ENCODE measurements at regions of chr7 and their contacts with region 1.

Region 1: DNA sequence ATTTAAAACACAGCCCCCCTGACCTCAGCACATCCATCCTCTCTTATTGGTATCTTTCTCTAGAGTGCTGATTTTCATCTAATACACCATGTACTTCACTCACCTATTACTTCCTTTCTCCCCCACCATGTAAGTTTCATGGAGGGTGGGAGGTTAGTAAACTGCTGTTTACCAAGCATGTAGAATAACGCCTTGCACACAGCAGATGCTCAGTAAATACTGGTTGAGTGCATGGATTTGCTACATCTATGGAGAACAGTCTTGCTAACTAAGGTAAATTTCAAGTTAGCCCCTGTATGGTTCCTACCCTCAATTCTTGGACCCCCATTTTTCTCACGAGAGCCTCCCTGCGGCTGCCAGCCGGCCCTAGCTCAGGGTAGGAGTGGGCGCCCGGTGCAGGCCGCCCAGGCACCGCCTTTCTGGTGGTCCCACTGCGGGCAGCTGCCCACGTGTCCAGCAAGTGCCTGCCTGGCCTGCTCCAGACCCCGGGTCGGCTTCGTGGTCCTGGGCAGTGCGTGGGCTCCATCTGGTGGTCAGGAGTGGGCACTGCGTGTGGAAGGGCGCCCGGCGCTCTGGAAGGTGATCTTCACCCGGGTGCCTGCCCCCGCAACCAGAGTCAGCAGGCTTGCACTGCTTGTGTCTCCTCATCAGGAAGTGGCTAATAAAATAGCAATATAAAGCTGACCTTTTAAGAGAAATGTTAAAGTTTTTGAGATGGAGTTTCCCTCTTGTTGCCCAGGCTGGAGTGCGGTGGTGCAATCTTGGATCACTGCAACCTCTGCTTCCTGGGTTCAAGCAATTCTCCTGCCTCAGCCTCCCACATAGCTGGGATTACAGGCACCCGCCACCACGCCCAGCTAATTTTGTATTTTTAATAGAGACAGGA is 63.4 kb upstream of the DNAJB6 start:
- DNase-seq: peak; percentile 17 to 66 (median 50)
- ATAC-seq: peak; percentile 84
- H3K4me3 ChIP-seq: no peak overlapping the region
- H3K4me3 Mint-ChIP-seq: peak overlapping the region in 1 of 10 donors; percentile 25
- H3K27ac ChIP-seq: no peak overlapping the region
- H3K27ac Mint-ChIP-seq: peak overlapping the region in 5 of 9 donors; percentile 16 to 81 (median 69)
- H3K4me1 ChIP-seq: peaks cover 6 to 14% of the 10 kb centered on the region in 2 donors
- H3K4me1 Mint-ChIP-seq: peaks cover 0 to 25% (median 13%) of the 10 kb centered on the region in 7 donors
- H3K27me3 ChIP-seq: no peaks in the 10 kb centered on the region
- H3K27me3 Mint-ChIP-seq: peaks cover 0 to 4% (median 0%) of the 10 kb centered on the region in 5 donors

Region 2: DNA sequence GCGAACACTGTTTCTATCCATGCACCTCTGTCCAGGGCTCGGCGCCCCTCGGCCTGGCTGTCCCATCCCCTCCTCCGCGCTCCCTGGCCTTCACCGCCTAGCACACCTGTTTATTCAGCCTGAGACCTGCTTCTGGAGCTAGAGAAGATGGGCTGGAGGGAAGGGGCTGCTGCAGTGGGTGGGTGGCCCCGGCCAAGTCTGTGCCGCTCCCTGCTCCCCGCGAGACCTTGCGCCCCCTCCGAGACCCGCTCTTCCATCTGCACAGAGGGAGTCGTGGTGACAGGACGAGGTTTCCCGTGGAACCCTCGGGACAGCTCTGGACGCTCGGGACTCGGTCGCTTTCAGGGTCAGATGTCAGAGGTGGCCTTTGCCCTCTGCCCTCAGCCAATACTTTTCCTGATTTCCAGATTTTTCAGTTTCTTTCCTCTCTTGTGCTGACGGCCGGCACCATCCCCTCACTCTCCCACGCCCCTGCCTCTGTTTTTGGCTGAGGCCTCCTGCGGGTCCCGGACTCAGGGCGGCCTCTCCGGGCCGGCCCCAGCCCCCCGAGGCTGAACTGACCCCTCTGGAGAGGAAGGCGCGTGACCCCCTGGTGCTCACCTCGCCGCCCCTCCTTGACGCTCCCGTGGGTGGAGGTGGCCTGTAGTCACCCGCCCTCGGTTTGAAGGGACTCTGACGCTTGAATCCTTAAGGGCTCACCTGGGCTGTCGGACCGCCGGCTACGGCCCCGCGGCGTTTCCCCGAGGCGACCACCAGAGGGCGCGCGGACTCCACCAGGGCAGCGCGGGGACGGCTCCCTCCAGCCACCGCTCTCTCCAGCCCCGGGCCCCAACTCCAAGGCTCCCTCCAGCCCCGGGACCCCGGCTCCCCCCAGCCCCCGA is 1476.8 kb before region 1 on chr7:
- CTCF ChIA-PET with region 1: no interaction called
- POLR2A ChIA-PET with region 1: no interaction called
- intact Hi-C with region 1: loop called in 1 of 2 experiments (anchors 1 kb)
- DNase-seq: peak; percentile 23 to 80 (median 54)
- ATAC-seq: peak; percentile 79
- H3K4me3 ChIP-seq: no peak overlapping the region
- H3K4me3 Mint-ChIP-seq: no peak overlapping the region
- H3K27ac ChIP-seq: no peak overlapping the region
- H3K27ac Mint-ChIP-seq: no peak overlapping the region
- H3K4me1 ChIP-seq: no peaks in the 10 kb centered on the region
- H3K4me1 Mint-ChIP-seq: peaks cover 0 to 12% (median 8%) of the 10 kb centered on the region in 7 donors
- H3K27me3 ChIP-seq: peaks cover 0 to 3% of the 10 kb centered on the region in 2 donors
- H3K27me3 Mint-ChIP-seq: peaks cover 28 to 45% (median 33%) of the 10 kb centered on the region in 5 donors

Region 3: GRCh38 chr7:156969972-156970420 is 303.5 kb before region 1 on chr7:
- CTCF ChIA-PET with region 1: interaction called, 3 read pairs
- POLR2A ChIA-PET with region 1: no interaction called
- intact Hi-C with region 1: loop called in 1 of 2 experiments (anchors 1 kb)
- DNase-seq: peak in 4 of 9 donors; percentile 11 to 26 (median 16)
- ATAC-seq: peak; percentile 52
- H3K4me3 ChIP-seq: no peak overlapping the region
- H3K4me3 Mint-ChIP-seq: no peak overlapping the region
- H3K27ac ChIP-seq: no peak overlapping the region
- H3K27ac Mint-ChIP-seq: peak overlapping the region in 1 of 9 donors; percentile 59
- H3K4me1 ChIP-seq: no peaks in the 10 kb centered on the region
- H3K4me1 Mint-ChIP-seq: no peaks in the 10 kb centered on the region
- H3K27me3 ChIP-seq: no peaks in the 10 kb centered on the region
- H3K27me3 Mint-ChIP-seq: no peaks in the 10 kb centered on the region

Region 4: DNA sequence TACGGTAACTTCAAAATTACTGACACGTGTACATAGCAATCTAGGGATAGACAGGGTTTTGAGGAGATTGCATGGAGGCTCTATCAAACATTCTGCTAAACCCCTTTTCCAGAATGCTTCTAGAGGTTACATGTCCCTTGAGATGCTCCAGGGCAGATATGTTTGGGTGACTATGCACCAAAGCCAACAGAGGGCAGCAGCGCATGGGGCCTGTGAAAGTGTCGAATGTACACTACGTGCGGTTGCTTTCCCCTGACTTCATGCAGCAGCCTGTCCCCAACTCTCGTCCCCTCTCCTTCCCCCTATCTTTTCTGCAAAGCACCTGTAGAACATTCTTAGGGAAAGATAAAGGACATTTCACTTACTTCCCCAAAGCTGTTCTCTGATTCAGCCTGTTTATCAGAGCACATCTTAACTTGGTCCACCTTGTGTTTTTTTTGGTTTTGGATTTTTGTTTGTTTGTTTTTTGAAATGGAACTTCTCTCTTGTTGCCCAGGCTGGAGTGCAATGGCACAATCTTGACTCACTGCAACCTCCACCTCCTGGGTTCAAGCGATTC is 44.5 kb before region 1 on chr7:
- CTCF ChIA-PET with region 1: no interaction called
- POLR2A ChIA-PET with region 1: no interaction called
- intact Hi-C with region 1: no loop called
- DNase-seq: peak in 5 of 9 donors; percentile 9 to 28 (median 15)
- ATAC-seq: peak; percentile 53
- H3K4me3 ChIP-seq: no peak overlapping the region
- H3K4me3 Mint-ChIP-seq: no peak overlapping the region
- H3K27ac ChIP-seq: no peak overlapping the region
- H3K27ac Mint-ChIP-seq: no peak overlapping the region
- H3K4me1 ChIP-seq: no peaks in the 10 kb centered on the region
- H3K4me1 Mint-ChIP-seq: peaks cover 0 to 4% (median under 1%) of the 10 kb centered on the region in 7 donors
- H3K27me3 ChIP-seq: no peaks in the 10 kb centered on the region
- H3K27me3 Mint-ChIP-seq: no peaks in the 10 kb centered on the region

Region 5: DNA sequence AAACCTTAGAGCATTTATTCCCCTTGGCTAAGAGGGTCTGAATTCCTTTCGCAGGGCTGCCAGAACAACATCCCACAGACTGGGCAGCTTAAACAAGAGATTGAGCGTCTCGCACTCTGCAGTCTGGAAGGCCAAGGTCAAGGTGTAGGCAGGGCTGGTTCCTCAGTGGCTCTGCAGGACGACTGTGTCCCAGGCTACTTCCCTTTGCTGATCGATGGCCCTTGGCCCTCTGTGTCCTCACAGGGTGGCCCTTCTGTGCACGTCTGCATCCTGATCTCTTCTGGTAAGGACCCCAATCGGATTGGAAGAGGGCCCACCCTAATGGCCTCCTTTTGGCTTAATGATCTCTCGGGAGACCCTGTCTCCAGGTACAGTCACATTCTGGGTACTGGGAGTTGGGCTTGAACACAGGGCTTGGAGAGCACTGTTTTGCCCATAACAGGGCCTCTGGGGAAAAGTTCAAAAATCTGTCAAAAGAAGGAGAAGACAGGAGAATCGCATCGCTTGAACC is 28.2 kb after region 1 on chr7:
- CTCF ChIA-PET with region 1: interaction called, 3 read pairs
- POLR2A ChIA-PET with region 1: no interaction called
- intact Hi-C with region 1: loop called in 1 of 2 experiments (anchors 2 kb)
- DNase-seq: no peak
- ATAC-seq: no peak
- H3K4me3 ChIP-seq: no peak overlapping the region
- H3K4me3 Mint-ChIP-seq: peak overlapping the region; percentile 66 to 84 (median 72)
- H3K27ac ChIP-seq: no peak overlapping the region
- H3K27ac Mint-ChIP-seq: peak overlapping the region; percentile 3 to 88 (median 80)
- H3K4me1 ChIP-seq: peaks cover 10 to 23% of the 10 kb centered on the region in 2 donors
- H3K4me1 Mint-ChIP-seq: peaks cover 19 to 39% (median 36%) of the 10 kb centered on the region in 7 donors
- H3K27me3 ChIP-seq: no peaks in the 10 kb centered on the region
- H3K27me3 Mint-ChIP-seq: no peaks in the 10 kb centered on the region